ENCODE measurements at regions of chr7 and their contacts with region 1.

Region 1: DNA sequence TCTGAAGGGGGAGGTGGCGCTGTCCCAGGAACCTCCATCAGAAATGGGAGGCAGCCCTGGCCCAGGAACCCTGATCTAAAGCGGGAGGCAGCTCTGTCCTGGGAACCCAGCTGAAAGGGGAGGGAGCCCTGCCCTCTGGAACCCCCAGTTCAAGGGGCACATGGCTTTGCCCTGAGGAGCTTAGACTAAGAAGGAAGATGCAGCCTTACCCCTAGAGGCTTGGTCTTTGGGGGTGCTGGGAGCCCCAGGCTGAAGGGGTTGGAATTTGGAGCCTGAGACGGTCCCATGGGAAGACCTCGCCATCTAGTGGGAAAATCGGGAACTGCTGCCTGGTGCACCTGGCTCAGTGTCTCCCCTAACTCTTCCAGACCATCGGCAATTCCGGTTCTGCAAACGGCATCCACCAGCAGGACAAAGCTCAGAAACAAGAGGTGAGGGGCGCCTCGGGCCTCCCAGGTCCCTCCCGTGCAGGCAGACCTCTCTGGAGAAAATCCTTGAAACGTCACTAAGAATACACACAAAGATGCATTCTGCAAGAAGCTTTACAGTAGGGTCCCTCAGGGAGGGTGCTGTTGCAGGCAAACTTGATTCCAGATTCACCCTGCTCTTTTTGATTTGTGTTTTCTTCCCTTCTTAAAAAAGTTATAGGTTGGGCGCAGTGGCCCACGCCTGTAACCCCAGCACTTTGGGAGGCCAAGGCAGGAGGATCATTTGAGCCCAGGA is 52.4 kb upstream of the GTF2IRD1 start:
- DNase-seq: peak; percentile 93
- ATAC-seq: peak; percentile 63
- H3K4me3 Mint-ChIP-seq: no peak overlapping the region
- H3K27ac Mint-ChIP-seq: no peak overlapping the region
- H3K4me1 Mint-ChIP-seq: peaks cover 5% of the 10 kb centered on the region; the same call in 1 of the 2 replicates
- H3K27me3 Mint-ChIP-seq: no peaks in the 10 kb centered on the region; the same call in 1 of the 2 replicates
- CTCF ChIP-seq: peak; percentile 97

Region 2: GRCh38 chr7:74217455-74218342 is 183.6 kb before region 1 on chr7:
- CTCF ChIA-PET with region 1: interaction called, 31 read pairs
- POLR2A ChIA-PET with region 1: no interaction called
- DNase-seq: no peak
- ATAC-seq: no peak
- H3K4me3 Mint-ChIP-seq: no peak overlapping the region
- H3K27ac Mint-ChIP-seq: no peak overlapping the region
- H3K4me1 Mint-ChIP-seq: no peaks in the 10 kb centered on the region
- H3K27me3 Mint-ChIP-seq: no peaks in the 10 kb centered on the region
- CTCF ChIP-seq: no peak

Region 3: DNA sequence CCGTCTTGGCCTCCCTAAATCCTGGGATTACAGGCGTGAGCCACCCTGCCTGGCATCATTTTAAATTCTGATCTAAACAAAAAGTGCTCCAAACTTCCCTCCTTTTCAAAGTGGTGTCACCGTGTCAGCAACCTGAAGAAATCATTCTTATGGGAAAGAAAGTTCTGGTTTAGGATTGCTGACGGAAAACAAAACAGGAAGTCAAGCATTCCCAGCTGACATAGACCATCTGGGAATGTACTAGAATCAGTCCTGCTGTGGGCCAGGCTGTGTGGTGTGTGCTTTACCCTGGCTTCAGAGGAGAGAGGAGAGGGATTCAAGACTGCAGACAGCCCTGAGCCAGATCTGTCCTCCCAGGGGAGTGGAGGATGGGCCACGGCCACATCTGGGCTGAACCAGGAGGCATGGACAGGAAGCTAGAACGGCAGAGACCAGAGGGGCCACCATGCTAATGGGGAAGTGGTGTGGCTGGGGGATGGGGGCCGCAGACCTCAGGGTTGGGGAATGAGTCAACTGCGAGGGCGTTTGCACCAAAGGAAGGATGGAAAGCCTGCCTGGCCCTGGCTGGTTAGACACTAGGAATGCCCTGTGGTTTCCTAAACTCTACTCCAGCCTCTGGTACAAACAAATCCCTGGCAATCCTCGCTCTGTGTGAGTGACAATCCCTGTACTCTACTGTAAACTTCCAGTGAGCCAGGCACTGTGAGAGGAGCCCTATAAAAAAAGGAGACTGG is 128.8 kb before region 1 on chr7:
- CTCF ChIA-PET with region 1: interaction called, 33 read pairs
- POLR2A ChIA-PET with region 1: no interaction called
- DNase-seq: peak; percentile 62
- ATAC-seq: peak; percentile 62
- H3K4me3 Mint-ChIP-seq: no peak overlapping the region
- H3K27ac Mint-ChIP-seq: peak overlapping the region; percentile 95
- H3K4me1 Mint-ChIP-seq: peaks cover 26% of the 10 kb centered on the region
- H3K27me3 Mint-ChIP-seq: no peaks in the 10 kb centered on the region
- CTCF ChIP-seq: no peak

Region 4: DNA sequence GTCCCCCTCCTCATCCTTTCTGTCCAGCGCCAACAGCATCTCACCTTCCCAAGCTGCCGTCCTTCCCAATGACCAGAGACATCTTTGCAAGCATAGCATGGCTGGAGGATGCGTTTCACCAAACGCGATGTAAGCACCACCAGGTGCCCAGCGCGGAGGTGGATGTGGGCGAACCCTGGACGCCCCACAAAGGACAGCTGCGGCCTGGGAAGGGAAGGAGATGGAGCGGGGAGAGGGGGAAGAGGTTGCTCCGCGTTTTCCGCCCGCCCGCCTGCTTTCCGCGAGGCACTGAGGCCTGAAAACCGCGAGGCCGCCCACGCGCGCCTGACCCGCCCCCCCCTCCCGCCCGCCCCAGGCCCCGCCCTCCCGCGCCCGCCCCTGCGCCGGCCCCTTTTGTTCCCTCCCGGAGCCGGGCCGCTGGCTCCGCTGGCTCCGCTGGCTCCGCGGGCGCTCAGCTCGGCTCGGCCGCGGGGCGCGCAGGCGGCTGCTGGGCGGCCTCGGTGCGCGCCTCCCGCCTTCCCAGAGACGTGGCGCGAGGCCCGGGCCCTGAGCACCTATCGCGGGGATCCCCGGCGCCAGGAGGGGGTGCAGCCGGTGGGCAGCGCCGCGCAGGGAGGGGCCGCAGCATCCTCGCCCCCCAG is 112.2 kb before region 1 on chr7 and contains the start of gene CLIP2:
- CTCF ChIA-PET with region 1: interaction called, 18 read pairs
- POLR2A ChIA-PET with region 1: no interaction called
- DNase-seq: peak; percentile 77
- ATAC-seq: peak; percentile 74
- H3K4me3 Mint-ChIP-seq: peak within 1 kb of the TSS; percentile 85
- H3K27ac Mint-ChIP-seq: peak within 1 kb of the TSS; percentile 84; the same call in 1 of the 2 replicates
- H3K4me1 Mint-ChIP-seq: peaks cover 55% of the 10 kb centered on the region
- H3K27me3 Mint-ChIP-seq: peaks cover 5% of the 10 kb centered on the region
- CTCF ChIP-seq: no peak
- total RNA-seq, gene CLIP2: 48.1 to 49.7 TPM (median 48.4 TPM) in 3 replicates

Region 5: DNA sequence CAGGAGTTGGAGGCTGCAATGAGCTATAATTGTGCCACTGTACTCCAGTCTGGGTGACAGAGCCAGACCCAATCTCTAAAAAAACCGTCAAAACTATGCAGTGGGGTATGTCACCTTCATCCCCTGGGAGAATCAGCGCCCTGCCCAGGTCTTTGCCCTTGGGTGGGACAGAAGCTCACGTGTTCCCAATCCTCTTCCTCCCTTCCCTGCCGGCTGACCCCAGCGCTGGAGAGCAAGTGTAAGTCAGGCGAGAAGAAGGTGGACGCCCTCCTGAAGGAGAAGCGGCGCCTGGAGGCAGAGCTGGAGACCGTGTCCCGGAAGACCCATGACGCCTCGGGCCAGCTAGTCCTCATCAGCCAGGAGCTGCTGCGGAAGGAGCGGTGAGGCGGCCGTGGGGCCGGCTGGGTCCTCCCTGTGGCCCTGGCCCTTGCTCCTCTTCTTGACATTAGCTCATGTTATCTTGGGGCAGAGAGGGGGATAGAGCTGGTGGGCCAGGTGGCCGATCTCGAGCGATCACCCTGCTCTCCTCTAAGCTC is 12.3 kb before region 1 on chr7:
- CTCF ChIA-PET with region 1: interaction called, 12 read pairs
- POLR2A ChIA-PET with region 1: no interaction called
- DNase-seq: no peak
- ATAC-seq: no peak
- H3K4me3 Mint-ChIP-seq: no peak overlapping the region
- H3K27ac Mint-ChIP-seq: no peak overlapping the region
- H3K4me1 Mint-ChIP-seq: peaks cover 3% of the 10 kb centered on the region
- H3K27me3 Mint-ChIP-seq: no peaks in the 10 kb centered on the region
- CTCF ChIP-seq: no peak

Region 6: GRCh38 chr7:74429153-74429747 is 28.0 kb after region 1 on chr7:
- CTCF ChIA-PET with region 1: interaction called, 20 read pairs
- POLR2A ChIA-PET with region 1: no interaction called
- DNase-seq: peak; percentile 54
- ATAC-seq: peak; percentile 85
- H3K4me3 Mint-ChIP-seq: peak overlapping the region; percentile 36
- H3K27ac Mint-ChIP-seq: no peak overlapping the region; the same call in 1 of the 2 replicates
- H3K4me1 Mint-ChIP-seq: peaks cover 23% of the 10 kb centered on the region
- H3K27me3 Mint-ChIP-seq: no peaks in the 10 kb centered on the region
- CTCF ChIP-seq: no peak

Measured in WTC11 (cell line).